GM10248 (cell line): ENCODE measurements at regions of chr6 and their contacts with region 1.

Region 1: DNA sequence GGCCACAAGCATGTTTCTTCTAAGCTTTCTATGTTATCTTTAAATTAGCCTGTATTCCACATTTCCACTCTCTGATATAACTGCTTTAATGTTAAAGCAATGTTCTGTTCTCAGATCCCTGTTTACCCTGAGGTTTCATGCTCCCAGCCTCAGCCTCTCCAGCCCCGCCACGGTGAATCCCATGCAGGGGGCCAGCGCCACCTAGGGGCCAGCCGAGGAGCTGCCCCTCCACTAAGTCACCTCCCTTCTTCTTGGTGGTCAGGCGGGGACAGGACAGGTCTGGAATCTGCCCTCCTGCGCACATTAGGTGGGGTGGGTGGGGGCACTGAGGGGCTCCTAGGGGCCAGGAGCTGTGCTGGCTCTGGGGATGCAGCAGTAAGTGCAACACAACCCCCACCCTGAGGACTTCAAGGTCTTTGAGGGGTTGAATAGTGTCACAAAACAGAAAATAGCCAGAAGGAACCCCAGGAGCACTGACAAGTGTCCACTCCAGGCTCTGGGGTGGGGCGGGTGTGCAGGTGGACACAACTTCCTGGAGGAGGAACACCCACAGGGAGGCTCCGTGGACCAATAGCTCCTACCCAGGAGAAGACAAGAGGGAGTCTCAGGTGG is 61.6 kb downstream of the RAB44 start:
- DNase-seq: peak; percentile 89
- CTCF ChIP-seq: peak; percentile 97

Region 2: DNA sequence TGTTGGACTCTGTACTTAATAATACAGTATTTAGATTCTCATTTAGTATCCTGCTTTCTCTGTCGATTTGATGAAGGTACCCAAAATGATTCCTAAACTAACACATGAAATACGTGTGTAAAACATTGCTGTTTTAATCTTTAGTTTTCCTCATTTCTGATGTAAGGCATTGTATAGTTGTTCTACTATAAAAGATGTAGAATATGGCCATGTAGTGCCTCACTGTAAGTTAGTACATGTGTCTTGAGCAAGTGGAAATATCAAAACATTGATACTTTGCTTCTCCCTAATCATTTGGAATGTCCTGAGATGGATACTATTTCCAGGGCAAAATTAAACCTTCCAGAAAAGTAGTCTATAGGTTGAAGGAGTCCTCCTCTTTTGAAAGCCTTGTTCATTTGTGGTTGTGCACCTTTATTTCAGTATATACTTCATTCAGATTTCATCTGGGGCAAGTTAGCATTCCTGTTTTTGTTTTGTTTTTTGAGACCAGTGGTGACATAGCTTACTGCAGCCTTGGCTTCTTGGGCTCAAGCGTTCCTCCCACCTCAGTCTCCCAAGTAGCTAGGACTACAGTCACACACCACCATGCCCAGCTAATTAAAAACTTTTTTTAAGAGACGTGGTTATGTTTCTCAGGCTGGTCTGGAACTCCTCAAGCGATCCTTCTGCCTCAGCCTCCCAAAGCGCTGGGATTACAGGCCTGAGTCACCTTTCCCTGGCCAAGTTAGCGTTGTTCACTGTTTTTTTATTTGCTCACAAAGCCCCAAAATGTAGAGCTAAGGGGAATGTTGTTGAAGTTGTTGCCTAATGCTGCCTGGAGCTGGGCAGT is 153.5 kb before region 1 on chr6:
- CTCF ChIA-PET with region 1: interaction called, 15 read pairs
- POLR2A ChIA-PET with region 1: no interaction called
- DNase-seq: no peak
- CTCF ChIP-seq: no peak

Region 3: DNA sequence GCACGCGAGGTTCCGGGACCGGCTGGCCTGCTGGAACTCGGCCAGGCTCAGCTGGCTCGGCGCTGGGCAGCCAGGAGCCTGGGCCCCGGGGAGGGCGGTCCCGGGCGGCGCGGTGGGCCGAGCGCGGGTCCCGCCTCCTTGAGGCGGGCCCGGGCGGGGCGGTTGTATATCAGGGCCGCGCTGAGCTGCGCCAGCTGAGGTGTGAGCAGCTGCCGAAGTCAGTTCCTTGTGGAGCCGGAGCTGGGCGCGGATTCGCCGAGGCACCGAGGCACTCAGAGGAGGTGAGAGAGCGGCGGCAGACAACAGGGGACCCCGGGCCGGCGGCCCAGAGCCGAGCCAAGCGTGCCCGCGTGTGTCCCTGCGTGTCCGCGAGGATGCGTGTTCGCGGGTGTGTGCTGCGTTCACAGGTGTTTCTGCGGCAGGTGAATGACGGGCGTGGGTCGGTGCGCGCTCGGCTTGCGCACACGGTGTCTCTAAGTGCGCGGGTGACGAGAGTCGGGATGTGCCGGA is 80.7 kb before region 1 on chr6 and contains the start of gene CDKN1A:
- CTCF ChIA-PET with region 1: interaction called, 21 read pairs
- POLR2A ChIA-PET with region 1: interaction called, 3 read pairs
- DNase-seq: peak; percentile 87
- CTCF ChIP-seq: no peak

Region 4: DNA sequence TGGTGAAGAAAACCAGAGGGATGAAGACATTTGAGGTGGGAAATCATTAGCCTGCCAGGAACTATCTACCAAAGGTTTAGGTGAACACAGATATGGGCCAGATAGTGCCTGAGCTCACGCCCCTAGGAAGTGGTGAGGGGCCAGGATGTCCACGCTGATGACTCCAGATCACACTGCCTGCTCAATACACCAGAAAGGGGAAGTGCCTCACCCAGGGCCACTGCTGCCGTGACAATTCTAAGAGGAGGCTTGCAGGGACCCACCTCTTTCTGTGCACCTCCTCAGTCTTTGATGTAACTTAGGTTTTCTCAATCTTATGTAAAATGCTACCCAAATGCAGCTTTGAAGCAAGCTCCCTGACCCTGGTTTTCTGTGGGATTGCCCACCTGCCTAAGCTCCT is 67.0 kb before region 1 on chr6:
- CTCF ChIA-PET with region 1: interaction called, 15 read pairs
- POLR2A ChIA-PET with region 1: interaction called, 4 read pairs
- DNase-seq: peak; percentile 79
- CTCF ChIP-seq: no peak

Region 5: GRCh38 chr6:36724514-36725390 is 34.5 kb before region 1 on chr6:
- CTCF ChIA-PET with region 1: interaction called, 17 read pairs
- POLR2A ChIA-PET with region 1: no interaction called
- DNase-seq: peak; percentile 71
- CTCF ChIP-seq: peak; percentile 58

Region 6: DNA sequence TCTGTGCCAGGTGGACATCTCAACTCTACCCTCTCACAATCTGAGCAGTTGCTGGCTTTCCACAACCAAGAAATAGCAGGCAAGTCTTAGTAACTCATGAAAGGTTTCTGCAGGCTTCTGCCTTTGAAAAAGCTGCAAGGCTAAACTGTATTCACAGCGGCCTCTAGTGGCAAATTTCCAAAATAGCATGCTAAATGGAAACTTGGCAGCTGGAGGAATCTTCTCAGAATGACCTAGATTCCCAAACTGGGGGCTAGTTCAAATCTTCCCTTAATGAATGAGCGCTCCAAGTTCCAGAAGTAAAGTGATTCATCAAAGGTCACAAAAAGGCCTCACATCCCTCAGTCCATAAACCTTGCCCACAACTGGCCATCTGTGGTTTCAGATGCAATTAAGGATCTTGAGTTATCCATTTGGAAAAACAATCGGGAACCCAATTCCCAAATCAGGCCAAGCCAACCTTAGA is 91.9 kb after region 1 on chr6:
- CTCF ChIA-PET with region 1: interaction called, 18 read pairs
- POLR2A ChIA-PET with region 1: no interaction called
- DNase-seq: peak; percentile 70
- CTCF ChIP-seq: peak; percentile 76